Dendritic cell treated with granulocyte-macrophage colony-stimulating factor and Interleukin-4, amounts not matched to agents 40 ng/mL and 50 ng/mL, for 4 days (primary cell): ENCODE measurements at regions of chr20 and their contacts with region 1.

Region 1: DNA sequence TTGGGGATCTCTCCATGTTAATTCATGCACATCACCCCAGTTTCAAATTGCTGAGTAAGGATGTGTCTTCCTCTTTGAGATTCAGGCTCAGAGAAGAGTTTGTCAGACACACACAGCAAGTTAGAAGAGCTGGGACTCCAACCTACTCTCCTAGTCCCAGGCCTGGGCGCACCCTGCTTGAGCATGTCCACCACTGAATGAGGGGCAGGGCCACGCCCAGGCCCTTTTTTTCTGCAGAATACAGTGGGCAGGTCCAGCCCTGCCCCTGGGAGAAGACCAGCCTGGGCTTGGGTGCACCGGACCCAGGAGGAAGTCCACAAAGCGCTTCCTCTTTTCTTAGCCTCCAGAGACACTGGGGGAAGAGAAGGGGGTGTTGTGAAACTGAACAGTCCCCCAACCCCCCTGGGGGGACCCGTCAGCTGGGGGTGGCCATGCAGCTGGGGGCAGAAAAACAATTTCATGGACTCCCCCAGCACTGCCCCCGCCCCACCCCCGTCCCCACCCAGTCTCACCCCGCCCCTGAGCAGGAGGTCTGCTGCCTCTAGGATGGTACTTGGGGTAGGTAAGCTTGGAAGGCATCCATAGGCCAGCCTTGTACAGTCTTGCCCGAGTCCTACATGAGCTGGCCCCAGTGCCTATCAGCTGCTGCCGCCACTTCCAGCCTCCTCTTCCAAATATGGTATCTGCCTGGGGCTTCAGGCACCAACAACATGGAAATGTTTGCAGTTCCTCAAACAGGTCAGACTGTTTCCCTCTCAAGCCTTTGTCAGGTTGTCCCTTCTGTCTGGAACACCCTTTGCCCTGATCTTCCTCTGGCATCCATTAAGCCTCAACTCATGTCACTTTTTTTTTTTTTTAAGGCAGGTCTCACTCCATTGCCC is 11.7 kb upstream of the HCK start:
- H3K4me3 Mint-ChIP-seq: peak overlapping the region; percentile 56
- H3K27ac Mint-ChIP-seq: peak overlapping the region; percentile 86
- H3K4me1 Mint-ChIP-seq: peaks cover 78% of the 10 kb centered on the region
- H3K27me3 Mint-ChIP-seq: no peaks in the 10 kb centered on the region

Region 2: DNA sequence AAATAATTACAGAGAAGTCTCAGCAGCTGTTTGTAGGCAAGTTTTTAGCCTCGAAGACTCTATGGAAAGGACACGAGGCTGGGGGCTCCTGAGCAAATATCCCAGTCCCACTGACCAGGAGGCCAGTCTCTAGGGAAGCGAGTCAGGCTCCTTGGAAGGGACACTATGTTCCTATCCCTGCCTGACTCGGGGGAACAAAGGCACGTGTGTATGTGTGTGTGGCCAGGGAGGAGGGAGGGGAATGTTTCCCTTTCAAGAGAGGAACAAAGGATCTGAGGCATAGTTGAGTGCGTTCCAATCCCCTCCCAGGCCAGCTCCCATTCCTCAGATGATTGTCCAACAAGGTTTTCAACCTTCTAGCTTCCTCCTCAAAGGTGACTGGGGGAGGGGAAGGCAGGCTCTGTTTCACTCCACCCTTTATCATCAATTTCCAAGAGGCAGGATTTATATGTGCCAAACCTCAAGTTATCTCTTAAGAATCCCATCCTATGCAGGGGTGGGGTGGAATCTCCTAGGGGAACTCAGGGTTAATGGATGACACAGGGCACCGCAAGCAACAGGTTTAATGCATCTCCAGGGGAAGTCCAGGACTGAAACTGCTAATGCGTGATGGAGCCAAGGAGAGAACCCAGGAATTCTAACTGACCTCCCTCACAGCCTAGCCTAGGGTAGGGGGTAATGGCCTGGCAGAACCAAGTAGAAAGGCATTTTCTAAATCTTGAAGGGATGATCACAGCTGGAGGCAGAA is 327.6 kb before region 1 on chr20:
- intact Hi-C with region 1: no loop called
- H3K4me3 Mint-ChIP-seq: no peak overlapping the region
- H3K27ac Mint-ChIP-seq: peak overlapping the region; percentile 56
- H3K4me1 Mint-ChIP-seq: peaks cover 94% of the 10 kb centered on the region
- H3K27me3 Mint-ChIP-seq: no peaks in the 10 kb centered on the region

Region 3: DNA sequence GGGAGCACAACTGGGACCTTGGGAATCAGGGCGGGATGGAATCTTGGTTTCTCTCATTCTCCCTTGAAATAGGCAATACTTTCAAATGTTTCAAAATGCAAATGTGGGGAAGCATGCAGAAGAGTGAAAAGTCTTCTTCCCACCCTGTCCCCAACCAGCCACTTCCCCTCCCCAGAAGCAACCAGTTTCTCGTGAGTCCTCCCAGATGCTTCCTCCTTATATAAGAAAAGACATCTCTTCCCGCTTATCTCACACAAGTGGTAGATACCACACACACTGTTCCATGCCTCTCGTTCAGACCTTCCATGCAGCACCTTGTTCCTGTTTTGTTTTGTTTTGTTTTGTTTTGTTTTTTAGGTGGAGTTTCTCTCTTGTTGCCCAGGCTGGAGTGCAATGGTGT is 36.8 kb after region 1 on chr20:
- intact Hi-C with region 1: loop called (anchors 5 kb)
- H3K4me3 Mint-ChIP-seq: peak overlapping the region; percentile 27
- H3K27ac Mint-ChIP-seq: peak overlapping the region; percentile 59
- H3K4me1 Mint-ChIP-seq: peaks cover 82% of the 10 kb centered on the region
- H3K27me3 Mint-ChIP-seq: no peaks in the 10 kb centered on the region

Region 4: GRCh38 chr20:32325706-32326503 is 285.5 kb after region 1 on chr20:
- intact Hi-C with region 1: no loop called
- H3K4me3 Mint-ChIP-seq: no peak overlapping the region
- H3K27ac Mint-ChIP-seq: no peak overlapping the region
- H3K4me1 Mint-ChIP-seq: no peaks in the 10 kb centered on the region
- H3K27me3 Mint-ChIP-seq: no peaks in the 10 kb centered on the region